GM13977 (cell line): ENCODE measurements at regions of chr12 and their contacts with region 1.

Region 1: GRCh38 chr12:109093022-109093918 is at the start of gene ALKBH2:
- DNase-seq: peak; percentile 90
- CTCF ChIP-seq: peak; percentile 98

Region 2: DNA sequence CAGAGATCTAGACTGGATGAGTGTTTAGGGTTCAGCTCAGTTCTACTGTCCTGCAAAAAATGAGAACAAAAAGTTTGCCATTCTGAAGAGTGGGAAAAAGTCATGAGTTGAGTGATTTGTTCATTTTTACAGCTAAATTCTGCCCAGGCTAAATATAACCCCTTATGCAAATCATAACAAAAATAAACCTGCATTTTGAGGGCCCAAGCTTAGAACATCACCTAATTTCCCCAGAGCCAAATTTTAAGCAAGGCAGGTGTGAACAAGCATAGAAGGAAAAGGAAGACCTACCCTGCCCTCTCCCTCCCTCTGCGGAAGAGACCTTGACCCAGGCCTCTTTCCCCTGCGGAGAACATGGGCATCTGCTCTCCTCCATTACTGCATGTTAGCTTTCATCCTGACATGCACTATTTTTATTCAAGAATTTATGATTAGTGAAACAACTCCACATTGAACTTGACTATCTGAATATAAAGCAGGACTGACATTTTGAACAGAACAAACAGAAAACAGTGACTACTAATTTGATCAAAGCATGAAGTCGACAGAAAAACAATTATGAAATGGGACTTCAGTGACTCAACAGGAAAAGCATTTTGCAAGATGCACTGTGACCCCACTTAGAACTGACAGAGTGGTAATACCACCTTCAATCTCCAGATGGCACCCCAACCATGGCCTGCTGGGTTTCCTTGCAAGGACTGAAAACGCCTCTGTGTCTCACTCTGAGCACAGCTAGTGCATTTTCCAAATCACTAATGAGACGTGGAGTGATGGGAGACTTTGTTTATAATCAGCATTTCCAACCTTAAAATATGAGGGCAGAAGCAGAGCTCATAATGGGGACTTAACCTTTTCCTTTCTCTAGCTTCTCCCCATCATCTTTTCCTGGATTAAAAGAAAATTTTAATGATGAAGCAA is 428.7 kb before region 1 on chr12:
- in situ Hi-C with region 1: loop called (anchors 25 kb)
- DNase-seq: peak; percentile 75
- CTCF ChIP-seq: peak; percentile 84

Region 3: GRCh38 chr12:108856428-108857157 is 236.7 kb before region 1 on chr12:
- in situ Hi-C with region 1: loop called (anchors 25 kb)
- DNase-seq: no peak
- CTCF ChIP-seq: no peak